ENCODE measurements at regions of chr14 and their contacts with region 1.

Region 1: GRCh38 chr14:94904636-94905035 is 134.7 kb upstream of the GSC start:
- DNase-seq: no peak

Region 2: GRCh38 chr14:94936401-94936892 is 31.8 kb after region 1 on chr14:
- intact Hi-C with region 1: no loop called
- DNase-seq: peak; percentile 65 to 95 (median 76)

Region 3: DNA sequence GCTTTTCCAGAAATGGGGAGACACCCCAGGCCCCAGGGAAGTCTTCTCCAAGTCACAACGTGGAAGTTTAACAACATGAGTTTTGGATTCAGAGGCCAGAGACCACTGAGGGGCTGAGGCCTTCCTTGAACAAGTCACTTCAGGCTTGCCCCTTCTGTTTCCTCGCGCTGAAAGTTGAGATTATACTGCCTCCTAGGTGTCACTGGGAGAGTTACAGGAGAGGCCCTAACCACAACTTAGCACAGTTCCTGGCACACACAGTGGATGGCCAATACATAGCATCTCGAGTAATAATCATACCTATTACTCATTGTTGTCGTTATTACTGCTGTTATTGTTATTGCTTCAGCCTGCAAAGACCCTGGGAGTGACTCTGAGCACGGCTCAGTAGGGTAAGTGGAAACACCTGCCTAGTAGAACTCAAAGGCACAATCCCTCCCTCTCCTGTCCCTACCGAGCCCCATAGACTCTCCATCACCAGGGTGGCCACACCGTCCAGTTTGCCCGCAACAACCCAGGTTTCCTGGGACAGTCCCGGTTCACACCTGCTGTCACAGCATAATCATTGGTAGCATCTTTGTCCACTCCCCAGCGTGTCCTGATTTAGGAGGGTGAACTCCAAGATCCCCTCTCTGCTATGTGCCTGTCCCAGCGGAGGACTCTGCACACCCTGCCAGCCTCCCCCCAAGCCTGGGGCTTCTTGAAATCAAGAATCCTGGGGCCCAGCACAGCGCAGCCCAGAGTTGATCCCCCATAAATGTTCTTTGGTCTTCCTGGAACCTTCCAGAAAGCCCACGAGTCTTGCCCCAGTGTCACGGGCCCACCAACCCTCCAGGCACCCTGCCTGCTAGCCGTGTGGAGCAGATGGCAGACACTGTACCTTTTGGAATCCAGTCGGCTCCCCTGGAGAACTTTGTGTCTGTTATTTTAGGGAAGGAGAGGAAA is 526.8 kb after region 1 on chr14:
- intact Hi-C with region 1: loop called (anchors 10 kb)
- DNase-seq: peak in 2 of 10 donors; percentile 63 to 67